Activated naive CD4-positive, alpha-beta T cell treated with anti-CD3 and anti-CD28 coated beads for 36 hours (primary cell): ENCODE measurements at regions of chr4 and their contacts with region 1.

Region 1: GRCh38 chr4:40199999-40200874 is 3.4 kb downstream of the RHOH start:
- DNase-seq: peak; percentile 88
- H3K4me3 Mint-ChIP-seq: peak overlapping the region; percentile 85
- H3K27ac Mint-ChIP-seq: peak overlapping the region; percentile 98
- H3K4me1 Mint-ChIP-seq: peaks cover 31% of the 10 kb centered on the region
- H3K27me3 Mint-ChIP-seq: no peaks in the 10 kb centered on the region

Region 2: DNA sequence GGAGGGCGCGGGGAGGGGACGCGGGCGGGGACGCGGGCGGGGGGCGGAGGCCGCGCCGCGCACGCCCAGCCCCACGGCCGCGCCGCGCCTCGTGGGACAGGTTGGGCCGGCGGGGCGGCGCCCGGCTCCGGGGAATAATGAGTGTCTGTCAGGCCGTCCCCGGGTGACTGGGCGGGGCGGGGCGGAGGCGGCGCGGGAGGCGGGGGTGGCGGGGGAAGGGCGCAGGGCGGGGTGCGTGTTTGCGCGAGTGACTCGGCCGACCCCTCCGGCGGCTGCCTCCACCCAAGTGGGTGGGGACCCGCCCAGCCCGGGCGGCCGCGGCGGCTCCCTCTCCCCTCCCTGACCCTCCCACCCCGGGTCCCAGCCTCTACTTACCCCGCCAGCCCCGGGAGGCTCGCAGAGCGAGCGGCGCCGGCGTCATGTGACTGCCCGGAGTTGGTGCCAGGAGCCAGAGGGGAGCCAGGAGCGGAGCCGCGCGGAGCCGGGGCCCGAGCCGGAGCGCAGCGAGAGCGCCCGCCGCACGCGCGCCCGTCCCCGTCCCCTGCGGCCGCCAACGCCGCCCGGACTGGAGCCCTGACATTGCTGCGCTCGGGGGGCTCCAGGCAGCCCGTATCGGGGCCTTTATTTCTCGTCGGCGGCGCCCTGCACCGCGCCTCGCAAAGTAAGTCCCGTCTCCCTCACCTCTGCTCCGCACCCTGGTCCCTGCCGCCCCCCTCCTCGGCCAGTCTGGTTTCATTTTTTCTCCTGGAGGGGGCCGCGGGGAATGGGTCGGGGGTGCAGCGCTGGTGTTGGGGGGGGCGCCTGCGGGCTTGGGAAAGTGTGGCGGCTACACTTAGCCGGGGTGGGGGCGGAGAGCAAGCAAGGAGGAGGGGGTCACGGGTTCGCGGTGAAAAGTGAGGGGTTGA is 1536.2 kb before region 1 on chr4 and contains the start of gene KLF3:
- CTCF ChIA-PET with region 1: no interaction called
- intact Hi-C with region 1: loop called (anchors 10 kb)
- DNase-seq: peak; percentile 86
- H3K4me3 Mint-ChIP-seq: peak within 1 kb of the TSS; percentile 79
- H3K27ac Mint-ChIP-seq: peak within 1 kb of the TSS; percentile 87
- H3K4me1 Mint-ChIP-seq: peaks cover 66% of the 10 kb centered on the region
- H3K27me3 Mint-ChIP-seq: no peaks in the 10 kb centered on the region
- total RNA-seq, gene KLF3: 15.2 to 15.8 TPM

Region 3: GRCh38 chr4:39900966-39901365 is 299.3 kb before region 1 on chr4:
- CTCF ChIA-PET with region 1: no interaction called
- intact Hi-C with region 1: no loop called
- DNase-seq: no peak
- H3K4me3 Mint-ChIP-seq: no peak overlapping the region
- H3K27ac Mint-ChIP-seq: no peak overlapping the region
- H3K4me1 Mint-ChIP-seq: no peaks in the 10 kb centered on the region
- H3K27me3 Mint-ChIP-seq: no peaks in the 10 kb centered on the region

Region 4: GRCh38 chr4:39977489-39978377 is 222.5 kb before region 1 on chr4 and contains the start of gene PDS5A:
- CTCF ChIA-PET with region 1: interaction called, 3 read pairs
- intact Hi-C with region 1: loop called (anchors 1 kb)
- DNase-seq: peak; percentile 91
- H3K4me3 Mint-ChIP-seq: peak within 1 kb of the TSS; percentile 93
- H3K27ac Mint-ChIP-seq: peak within 1 kb of the TSS; percentile 96
- H3K4me1 Mint-ChIP-seq: peaks cover 33% of the 10 kb centered on the region
- H3K27me3 Mint-ChIP-seq: no peaks in the 10 kb centered on the region
- total RNA-seq, gene PDS5A: 86.8 to 89.1 TPM

Region 5: DNA sequence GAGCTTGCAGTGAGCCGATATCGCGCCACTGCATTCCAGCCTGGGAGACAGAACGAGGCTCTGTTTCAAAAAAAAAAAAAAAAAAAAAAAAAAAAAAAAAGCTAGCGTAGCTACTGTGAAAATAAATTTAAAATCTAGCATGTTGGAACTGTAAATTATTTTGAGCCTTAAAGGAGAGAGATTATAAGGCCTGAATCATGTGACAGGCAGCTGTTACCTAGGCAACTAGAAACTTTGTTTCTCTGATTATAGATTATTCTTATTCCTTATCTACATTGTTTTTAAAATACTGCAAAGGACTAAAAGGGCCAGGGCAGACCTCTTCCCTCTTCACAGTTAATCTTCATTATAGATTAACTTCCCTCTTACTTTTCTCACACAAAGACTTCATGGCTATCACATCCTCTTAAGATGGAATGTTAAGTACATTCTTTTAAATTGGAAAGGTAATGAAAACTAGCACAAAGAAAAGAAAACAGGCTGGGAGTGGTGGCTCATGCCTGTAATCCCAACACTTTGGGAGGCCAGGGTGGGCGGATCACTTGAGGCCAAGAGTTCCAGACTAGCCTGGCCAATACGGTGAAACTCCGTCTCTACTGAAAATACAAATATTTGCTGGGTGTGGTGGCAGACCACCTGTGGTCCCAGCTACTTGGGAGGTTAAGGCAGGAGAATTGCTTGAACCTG is 201.4 kb before region 1 on chr4:
- CTCF ChIA-PET with region 1: no interaction called
- intact Hi-C with region 1: no loop called
- DNase-seq: no peak
- H3K4me3 Mint-ChIP-seq: no peak overlapping the region
- H3K27ac Mint-ChIP-seq: no peak overlapping the region
- H3K4me1 Mint-ChIP-seq: no peaks in the 10 kb centered on the region
- H3K27me3 Mint-ChIP-seq: no peaks in the 10 kb centered on the region

Region 6: GRCh38 chr4:40180356-40180755 is 19.9 kb before region 1 on chr4:
- CTCF ChIA-PET with region 1: interaction called, 3 read pairs
- intact Hi-C with region 1: loop called (anchors 1 kb)
- DNase-seq: no peak
- H3K4me3 Mint-ChIP-seq: no peak overlapping the region
- H3K27ac Mint-ChIP-seq: no peak overlapping the region
- H3K4me1 Mint-ChIP-seq: peaks cover 46% of the 10 kb centered on the region
- H3K27me3 Mint-ChIP-seq: no peaks in the 10 kb centered on the region

Region 7: DNA sequence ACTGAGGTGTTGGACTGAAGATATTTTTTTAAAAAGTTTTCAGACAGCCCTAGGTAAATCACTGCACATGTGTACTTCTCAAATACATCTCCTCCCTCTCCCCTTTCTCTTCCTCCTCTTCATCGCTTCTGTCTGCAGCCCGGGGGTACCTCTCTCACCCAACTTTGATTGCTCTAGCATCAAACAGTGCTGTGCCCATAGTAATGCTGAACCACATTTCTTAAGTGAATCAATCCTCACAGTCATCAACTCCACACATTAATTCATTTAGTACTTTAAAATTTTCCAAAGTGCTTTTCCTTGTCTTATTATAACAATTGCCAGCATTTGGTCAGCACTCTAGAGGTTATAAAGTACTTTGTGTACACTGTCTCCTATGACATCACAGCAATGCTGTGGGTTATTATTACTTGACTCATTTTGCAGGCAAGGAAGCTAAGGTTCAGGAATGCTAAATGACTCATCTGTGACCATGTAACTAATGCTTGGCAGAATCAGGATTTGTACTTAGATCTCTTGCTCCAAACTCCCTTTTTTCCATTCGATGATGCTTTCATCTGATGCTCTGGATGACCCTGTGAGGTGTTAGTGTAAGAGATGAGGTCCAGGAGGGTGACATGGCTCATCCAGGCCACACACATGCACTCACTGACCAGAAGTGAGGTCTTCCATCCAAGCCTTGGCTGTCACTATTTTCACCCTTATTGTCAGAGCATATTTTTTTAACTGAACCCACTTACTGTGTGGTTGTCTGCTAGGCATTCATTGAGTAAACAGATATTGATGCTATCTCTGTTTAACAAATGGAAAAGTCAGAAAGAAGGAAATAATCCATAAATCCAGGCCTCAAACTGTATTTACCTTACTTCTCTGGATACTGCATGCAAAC is 55.4 kb after region 1 on chr4:
- CTCF ChIA-PET with region 1: interaction called, 5 read pairs
- intact Hi-C with region 1: loop called (anchors 1 kb)
- DNase-seq: no peak
- H3K4me3 Mint-ChIP-seq: peak overlapping the region; percentile 0
- H3K27ac Mint-ChIP-seq: peak overlapping the region; percentile 75
- H3K4me1 Mint-ChIP-seq: peaks cover 77% of the 10 kb centered on the region
- H3K27me3 Mint-ChIP-seq: no peaks in the 10 kb centered on the region

Region 8: DNA sequence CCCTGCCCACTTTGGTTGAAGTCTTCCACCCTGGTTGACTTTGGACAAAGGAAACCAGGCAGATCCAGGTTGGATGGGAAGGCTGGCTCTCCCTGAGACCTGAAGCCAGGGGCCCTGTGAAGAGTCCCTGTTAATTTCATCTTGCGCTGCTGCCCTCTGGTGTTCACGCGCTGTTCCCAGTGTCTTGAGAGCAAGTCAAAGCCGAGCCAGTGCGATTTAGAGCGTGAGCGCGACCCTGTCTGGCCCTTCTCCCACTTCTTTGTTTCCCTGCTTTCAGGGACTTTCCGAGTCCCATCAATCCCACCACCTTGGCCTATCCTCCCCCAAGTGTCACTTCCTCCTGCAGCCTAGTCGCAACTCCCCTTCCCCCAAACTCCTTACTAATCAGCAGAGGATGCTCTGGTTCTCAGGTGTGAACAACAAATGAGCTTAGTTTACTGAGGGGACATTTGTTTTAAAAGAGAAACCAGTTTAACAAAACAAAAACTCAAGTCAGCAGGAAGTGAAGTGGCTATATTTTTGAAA is 109.1 kb after region 1 on chr4:
- CTCF ChIA-PET with region 1: interaction called, 10 read pairs
- intact Hi-C with region 1: loop called (anchors 1 kb)
- DNase-seq: peak; percentile 97
- H3K4me3 Mint-ChIP-seq: peak overlapping the region; percentile 71
- H3K27ac Mint-ChIP-seq: peak overlapping the region; percentile 97
- H3K4me1 Mint-ChIP-seq: peaks cover 89% of the 10 kb centered on the region
- H3K27me3 Mint-ChIP-seq: no peaks in the 10 kb centered on the region

Region 9: GRCh38 chr4:40672536-40673526 is 472.6 kb after region 1 on chr4:
- CTCF ChIA-PET with region 1: no interaction called
- intact Hi-C with region 1: loop called (anchors 5 kb)
- DNase-seq: peak; percentile 67
- H3K4me3 Mint-ChIP-seq: peak overlapping the region; percentile 32
- H3K27ac Mint-ChIP-seq: peak overlapping the region; percentile 86
- H3K4me1 Mint-ChIP-seq: peaks cover 37% of the 10 kb centered on the region
- H3K27me3 Mint-ChIP-seq: no peaks in the 10 kb centered on the region